Left lung (tissue), 14 donors: ENCODE measurements at regions of chr3 and their contacts with region 1.

Region 1: GRCh38 chr3:187679638-187680396 is 9.6 kb upstream of the SST start:
- DNase-seq: peak in 3 of 4 donors; percentile 36 to 63 (median 60)
- ATAC-seq: peak; percentile 100
- H3K4me3 ChIP-seq: no peak overlapping the region
- H3K27ac ChIP-seq: no peak overlapping the region
- H3K4me1 ChIP-seq: no peaks in the 10 kb centered on the region
- H3K27me3 ChIP-seq: peaks cover 0 to 13% of the 10 kb centered on the region in 2 donors
- CTCF ChIP-seq: peak; percentile 90 to 91

Region 2: GRCh38 chr3:187227658-187228258 is 452.1 kb before region 1 on chr3:
- intact Hi-C with region 1: loop called in 1 of 2 experiments (anchors 10 kb)
- DNase-seq: no peak
- ATAC-seq: no peak
- H3K4me3 ChIP-seq: no peak overlapping the region
- H3K27ac ChIP-seq: no peak overlapping the region
- H3K4me1 ChIP-seq: no peaks in the 10 kb centered on the region
- H3K27me3 ChIP-seq: no peaks in the 10 kb centered on the region
- CTCF ChIP-seq: no peak

Region 3: GRCh38 chr3:187319699-187320302 is 360.0 kb before region 1 on chr3:
- intact Hi-C with region 1: loop called (anchors 5 kb)
- DNase-seq: peak in 2 of 4 donors; percentile 28 to 50
- ATAC-seq: peak; percentile 98
- H3K4me3 ChIP-seq: no peak overlapping the region
- H3K27ac ChIP-seq: no peak overlapping the region
- H3K4me1 ChIP-seq: peaks cover 0 to 12% of the 10 kb centered on the region in 2 donors
- H3K27me3 ChIP-seq: peaks cover 0 to 31% of the 10 kb centered on the region in 2 donors
- CTCF ChIP-seq: peak; percentile 68 to 77

Region 4: DNA sequence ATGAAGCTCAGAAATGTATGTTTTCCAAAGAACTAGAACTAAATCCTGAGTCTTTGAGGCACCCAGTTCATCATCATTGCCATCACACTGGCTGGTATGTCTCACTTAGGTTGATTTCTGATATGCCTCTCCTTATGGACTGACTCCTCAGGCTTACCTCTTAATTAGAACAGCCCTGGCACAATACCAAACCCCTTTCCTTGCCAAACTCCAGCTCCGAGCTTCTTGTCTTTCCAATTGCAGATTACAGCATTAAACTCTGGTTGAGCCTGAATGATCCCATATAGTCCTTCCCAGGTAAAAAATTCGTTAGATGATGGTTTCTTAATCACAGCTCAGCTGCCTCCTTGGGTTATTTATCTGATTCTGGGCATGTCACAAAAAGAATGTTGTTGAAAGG is 245.3 kb before region 1 on chr3:
- intact Hi-C with region 1: no loop called
- DNase-seq: no peak
- ATAC-seq: no peak
- H3K4me3 ChIP-seq: no peak overlapping the region
- H3K27ac ChIP-seq: no peak overlapping the region
- H3K4me1 ChIP-seq: no peaks in the 10 kb centered on the region
- H3K27me3 ChIP-seq: peaks cover 0 to 3% of the 10 kb centered on the region in 2 donors
- CTCF ChIP-seq: no peak

Region 5: DNA sequence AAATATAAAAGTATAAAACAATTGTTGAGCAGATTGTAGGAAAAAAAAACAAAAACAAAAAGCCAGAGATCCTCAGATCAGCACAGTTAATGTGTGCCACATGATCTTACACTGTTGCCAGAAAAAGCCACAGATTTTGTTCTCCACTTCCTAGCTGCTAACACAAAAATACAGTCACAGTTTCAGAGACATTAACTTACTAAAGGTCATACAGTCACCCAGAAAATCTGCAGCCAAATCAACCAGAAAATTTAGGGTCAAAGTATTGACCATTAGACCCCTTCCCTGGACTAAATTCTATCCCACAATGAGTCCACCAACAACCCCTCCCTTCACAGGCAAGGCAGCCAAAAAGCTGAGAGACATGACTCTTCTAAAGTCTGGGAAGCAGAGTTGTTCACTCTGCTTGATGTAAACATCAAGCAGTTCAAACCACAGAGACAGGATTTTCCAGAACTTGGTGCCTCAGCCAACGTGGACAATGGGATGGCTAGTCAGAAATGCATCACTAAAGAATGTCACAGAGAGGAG is 68.8 kb before region 1 on chr3:
- intact Hi-C with region 1: loop called in 1 of 2 experiments (anchors 5 kb)
- DNase-seq: peak in 2 of 4 donors; percentile 5 to 33
- ATAC-seq: peak; percentile 67
- H3K4me3 ChIP-seq: no peak overlapping the region
- H3K27ac ChIP-seq: no peak overlapping the region
- H3K4me1 ChIP-seq: peaks cover 0 to 8% of the 10 kb centered on the region in 2 donors
- H3K27me3 ChIP-seq: peaks cover 0 to 23% of the 10 kb centered on the region in 2 donors
- CTCF ChIP-seq: no peak